Gastrocnemius medialis (tissue), 4 donors: ENCODE measurements at regions of chr17 and their contacts with region 1.

Region 1: DNA sequence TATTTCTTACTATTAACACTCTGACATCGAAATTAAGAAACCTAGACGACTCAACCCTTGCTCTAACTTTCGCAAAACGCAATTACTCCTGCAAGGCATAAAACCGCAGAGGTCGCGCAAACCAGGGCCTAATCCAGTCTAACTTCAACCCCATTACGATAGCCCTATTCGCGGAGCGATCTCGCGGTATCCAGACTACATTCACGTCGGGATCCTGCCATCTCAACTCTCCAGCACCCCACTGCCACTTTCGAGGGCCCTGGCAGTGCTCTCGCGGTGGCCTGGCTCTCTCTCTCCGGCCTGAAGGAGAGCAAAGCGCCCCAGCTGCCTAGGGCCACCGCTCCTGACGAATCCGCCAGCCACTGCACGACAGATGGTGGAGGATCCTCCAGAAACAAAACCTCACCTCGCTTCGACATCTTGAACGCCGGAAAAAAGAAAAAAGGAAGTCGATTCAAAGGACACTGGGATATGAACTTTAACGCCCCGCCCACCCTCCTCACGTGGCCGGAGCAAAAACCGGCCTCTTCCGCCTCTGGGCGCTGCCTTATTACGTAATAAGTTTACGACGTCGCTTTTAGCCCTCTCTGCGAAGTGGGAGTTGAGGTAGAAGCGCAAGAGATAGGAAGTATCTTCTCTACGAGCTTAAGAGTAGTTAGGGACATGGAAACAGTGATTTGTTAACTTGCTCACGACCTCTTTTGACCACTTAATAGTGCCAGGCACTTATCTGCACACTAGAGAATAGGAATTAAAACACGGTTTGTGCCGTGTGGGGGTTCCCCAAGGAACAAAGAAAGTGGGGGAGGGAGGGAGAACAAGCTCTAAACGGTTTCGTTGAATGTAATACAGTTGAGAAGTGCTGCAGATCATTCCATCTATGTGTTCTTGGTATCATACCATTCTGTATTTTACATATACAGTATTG is at the start of gene RPL23:
- DNase-seq: peak; percentile 94 to 95
- ATAC-seq: peak; percentile 97 to 99
- H3K4me3 ChIP-seq: peak within 1 kb of the TSS; percentile 69 to 74 (median 70)
- H3K27ac ChIP-seq: peak within 1 kb of the TSS; percentile 85 to 96 (median 92)
- H3K4me1 ChIP-seq: peaks cover 23 to 28% of the 10 kb centered on the region in 2 donors
- H3K27me3 ChIP-seq: no peaks in the 10 kb centered on the region
- CTCF ChIP-seq: peak in 1 of 5 experiments; percentile 19
- POLR2A ChIP-seq: peak; percentile 82 to 83
- total RNA-seq, gene RPL23: 878 to 1,126 (median 955) TPM

Region 2: GRCh38 chr17:38777641-38778250 is 75.8 kb before region 1 on chr17:
- in situ Hi-C with region 1: no loop called
- intact Hi-C with region 1: no loop called
- DNase-seq: no peak
- ATAC-seq: no peak
- H3K4me3 ChIP-seq: no peak overlapping the region
- H3K27ac ChIP-seq: no peak overlapping the region
- H3K4me1 ChIP-seq: no peaks in the 10 kb centered on the region
- H3K27me3 ChIP-seq: no peaks in the 10 kb centered on the region
- CTCF ChIP-seq: no peak
- POLR2A ChIP-seq: no peak

Region 3: GRCh38 chr17:38824899-38825761 is 28.4 kb before region 1 on chr17 and contains the start of gene CWC25:
- in situ Hi-C with region 1: no loop called
- intact Hi-C with region 1: loop called (anchors 1 kb)
- DNase-seq: peak; percentile 79 to 96
- ATAC-seq: peak; percentile 96 to 97
- H3K4me3 ChIP-seq: peak within 1 kb of the TSS; percentile 69 to 100 (median 90)
- H3K27ac ChIP-seq: peak within 1 kb of the TSS; percentile 96 to 99 (median 98)
- H3K4me1 ChIP-seq: peaks cover 18 to 21% of the 10 kb centered on the region in 2 donors
- H3K27me3 ChIP-seq: no peaks in the 10 kb centered on the region
- CTCF ChIP-seq: no peak
- POLR2A ChIP-seq: peak; percentile 71 to 85
- total RNA-seq, gene CWC25: 9.1 to 14.4 (median 12.3) TPM

Region 4: GRCh38 chr17:38967290-38967738 is 113.8 kb after region 1 on chr17 and contains the start of gene FBXO47:
- in situ Hi-C with region 1: no loop called
- intact Hi-C with region 1: no loop called
- DNase-seq: peak; percentile 77 to 91
- ATAC-seq: peak; percentile 98 to 99
- H3K4me3 ChIP-seq: peak within 1 kb of the TSS; percentile 24 to 44 (median 42)
- H3K27ac ChIP-seq: peak within 1 kb of the TSS; percentile 58 to 81 (median 73)
- H3K4me1 ChIP-seq: no peaks in the 10 kb centered on the region
- H3K27me3 ChIP-seq: no peaks in the 10 kb centered on the region
- CTCF ChIP-seq: peak in 3 of 5 experiments; percentile 15 to 16 (median 16)
- POLR2A ChIP-seq: peak; percentile 28 to 57
- total RNA-seq, gene FBXO47: not detected